ENCODE measurements at regions of chr13 and their contacts with region 1.

Region 1: DNA sequence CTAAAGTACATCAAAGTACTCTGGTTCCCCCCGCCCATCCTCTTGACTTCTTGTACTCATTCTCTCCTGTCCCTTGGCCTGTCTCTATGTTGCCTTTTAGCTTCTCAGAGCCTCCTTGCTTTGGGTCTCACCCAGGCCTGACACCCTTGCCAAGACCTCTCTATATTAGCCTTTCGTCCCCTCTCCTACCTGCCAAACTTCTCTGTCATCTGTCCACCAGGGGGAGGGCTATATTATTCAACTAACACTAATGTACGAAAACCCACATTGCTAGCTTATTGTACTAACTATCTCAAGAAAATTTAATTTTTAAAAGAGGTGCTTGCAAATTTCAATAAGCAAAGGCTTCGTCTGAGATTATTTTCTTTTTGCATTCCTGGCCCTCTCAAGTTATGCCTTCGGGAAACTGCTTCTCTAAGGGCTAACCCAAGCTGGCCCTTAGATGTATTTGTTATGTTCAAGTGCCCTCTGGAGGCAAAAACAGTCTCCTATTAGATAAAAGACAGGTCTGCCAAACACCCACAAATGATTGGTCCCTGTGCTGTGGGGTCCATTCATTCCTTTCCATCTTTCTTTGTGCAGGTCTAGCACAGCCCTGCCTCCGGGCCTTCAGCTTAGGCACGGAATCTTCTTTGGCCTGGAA is 6.3 kb upstream of the MRPS31 start:
- DNase-seq: no peak
- H3K4me3 ChIP-seq: peak overlapping the region in 2 of 4 donors; percentile 16 to 22
- H3K27ac ChIP-seq: peak overlapping the region in 1 of 4 donors; percentile 13
- H3K4me1 ChIP-seq: peaks cover 0 to 9% (median 0%) of the 10 kb centered on the region in 4 donors
- H3K27me3 ChIP-seq: no peaks in the 10 kb centered on the region
- CTCF ChIP-seq: peak in 3 of 4 experiments; percentile 60 to 69 (median 62)
- EP300 ChIP-seq: no peak
- POLR2A ChIP-seq: no peak

Region 2: GRCh38 chr13:39676315-39676876 is 1100.9 kb before region 1 on chr13:
- intact Hi-C with region 1: loop called (anchors 2 kb)
- DNase-seq: no peak
- H3K4me3 ChIP-seq: no peak overlapping the region
- H3K27ac ChIP-seq: no peak overlapping the region
- H3K4me1 ChIP-seq: no peaks in the 10 kb centered on the region
- H3K27me3 ChIP-seq: no peaks in the 10 kb centered on the region
- CTCF ChIP-seq: peak in 1 of 4 experiments; percentile 27
- EP300 ChIP-seq: no peak
- POLR2A ChIP-seq: no peak

Region 3: DNA sequence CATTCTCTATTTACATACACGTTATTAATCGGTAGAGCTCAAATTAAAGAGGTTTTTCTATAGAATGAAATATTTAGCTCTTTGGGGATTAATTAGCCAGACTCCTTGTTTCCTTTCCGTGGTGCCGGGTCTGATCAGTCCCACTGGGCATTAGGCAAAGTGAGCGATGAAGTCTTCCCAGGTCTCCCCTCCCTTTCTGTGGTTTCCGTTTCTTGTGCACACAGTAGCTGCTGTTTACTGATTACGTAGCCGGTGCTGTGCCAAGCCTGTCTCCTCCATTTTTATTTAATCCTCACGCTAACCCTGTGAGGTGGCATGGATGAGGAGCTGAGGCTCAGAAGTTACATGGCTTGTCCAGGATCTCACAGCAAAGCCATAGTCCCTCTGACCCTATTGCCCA is 21.1 kb after region 1 on chr13:
- intact Hi-C with region 1: no loop called
- DNase-seq: no peak
- H3K4me3 ChIP-seq: no peak overlapping the region
- H3K27ac ChIP-seq: no peak overlapping the region
- H3K4me1 ChIP-seq: no peaks in the 10 kb centered on the region
- H3K27me3 ChIP-seq: no peaks in the 10 kb centered on the region
- CTCF ChIP-seq: no peak
- EP300 ChIP-seq: no peak
- POLR2A ChIP-seq: no peak

Region 4: GRCh38 chr13:40940841-40941240 is 163.6 kb after region 1 on chr13:
- intact Hi-C with region 1: no loop called
- DNase-seq: no peak
- H3K4me3 ChIP-seq: no peak overlapping the region
- H3K27ac ChIP-seq: no peak overlapping the region
- H3K4me1 ChIP-seq: no peaks in the 10 kb centered on the region
- H3K27me3 ChIP-seq: no peaks in the 10 kb centered on the region
- CTCF ChIP-seq: no peak
- EP300 ChIP-seq: no peak
- POLR2A ChIP-seq: no peak

Region 5: GRCh38 chr13:41443966-41444365 is 666.7 kb after region 1 on chr13:
- intact Hi-C with region 1: no loop called
- DNase-seq: no peak
- H3K4me3 ChIP-seq: no peak overlapping the region
- H3K27ac ChIP-seq: no peak overlapping the region
- H3K4me1 ChIP-seq: no peaks in the 10 kb centered on the region
- H3K27me3 ChIP-seq: no peaks in the 10 kb centered on the region
- CTCF ChIP-seq: no peak
- EP300 ChIP-seq: no peak
- POLR2A ChIP-seq: no peak

Measured in sigmoid colon (tissue), 7 donors.